ENCODE measurements at regions of chr11 and their contacts with region 1.

Region 1: DNA sequence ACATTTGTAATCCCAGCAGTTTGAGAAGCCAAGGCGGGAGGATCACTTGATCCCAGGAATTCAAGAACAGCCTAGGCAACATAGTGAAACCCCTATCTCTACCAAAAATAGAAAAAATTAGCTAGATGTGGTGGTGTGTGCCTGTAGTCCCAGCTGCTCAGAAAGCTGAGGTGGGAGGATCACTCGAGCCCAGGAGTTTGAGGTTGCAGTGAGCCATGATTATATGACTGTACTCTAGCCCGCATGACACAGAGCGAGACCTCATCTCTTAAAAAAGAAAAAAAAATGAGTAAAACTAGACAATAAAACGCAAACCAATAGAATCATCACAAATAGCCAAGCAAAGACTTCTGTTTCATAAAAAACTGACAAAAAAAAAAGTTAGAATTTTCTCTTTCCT is 21.8 kb downstream of the NUCB2 start:
- DNase-seq: peak; percentile 84
- H3K4me3 Mint-ChIP-seq: no peak overlapping the region
- H3K27ac Mint-ChIP-seq: no peak overlapping the region
- H3K4me1 Mint-ChIP-seq: peaks cover 36% of the 10 kb centered on the region
- H3K27me3 Mint-ChIP-seq: no peaks in the 10 kb centered on the region

Region 2: GRCh38 chr11:17207317-17208258 is 90.7 kb before region 1 on chr11 and contains the start of gene PIK3C2A:
- CTCF ChIA-PET with region 1: no interaction called
- POLR2A ChIA-PET with region 1: no interaction called
- intact Hi-C with region 1: loop called (anchors 1 kb)
- DNase-seq: peak; percentile 96
- H3K4me3 Mint-ChIP-seq: peak within 1 kb of the TSS; percentile 99
- H3K27ac Mint-ChIP-seq: peak within 1 kb of the TSS; percentile 90
- H3K4me1 Mint-ChIP-seq: peaks cover 35% of the 10 kb centered on the region
- H3K27me3 Mint-ChIP-seq: no peaks in the 10 kb centered on the region
- total RNA-seq, gene PIK3C2A: 21.2 to 21.7 TPM

Region 3: DNA sequence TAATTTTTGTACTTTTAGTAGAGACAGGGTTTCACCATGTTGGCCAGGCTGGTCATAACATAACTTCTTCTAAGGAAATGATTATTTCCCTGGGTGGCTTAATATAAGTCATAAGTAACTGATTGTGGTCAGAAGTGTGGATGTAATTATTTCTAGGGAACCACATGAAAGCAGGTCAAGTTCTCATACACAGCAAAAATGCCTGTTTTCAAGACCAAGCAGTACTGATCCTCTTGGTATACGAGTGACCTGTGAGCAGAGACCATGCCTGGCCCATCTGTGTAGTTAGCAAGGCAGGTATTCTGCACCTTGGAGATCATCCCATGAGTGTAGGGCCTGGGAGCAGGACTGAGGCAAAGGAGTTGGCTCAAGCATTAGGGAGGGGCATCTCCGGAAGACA is 54.3 kb before region 1 on chr11:
- CTCF ChIA-PET with region 1: no interaction called
- POLR2A ChIA-PET with region 1: no interaction called
- intact Hi-C with region 1: loop called (anchors 1 kb)
- DNase-seq: no peak
- H3K4me3 Mint-ChIP-seq: no peak overlapping the region
- H3K27ac Mint-ChIP-seq: no peak overlapping the region
- H3K4me1 Mint-ChIP-seq: peaks cover 3% of the 10 kb centered on the region
- H3K27me3 Mint-ChIP-seq: peaks cover 18% of the 10 kb centered on the region

Region 4: DNA sequence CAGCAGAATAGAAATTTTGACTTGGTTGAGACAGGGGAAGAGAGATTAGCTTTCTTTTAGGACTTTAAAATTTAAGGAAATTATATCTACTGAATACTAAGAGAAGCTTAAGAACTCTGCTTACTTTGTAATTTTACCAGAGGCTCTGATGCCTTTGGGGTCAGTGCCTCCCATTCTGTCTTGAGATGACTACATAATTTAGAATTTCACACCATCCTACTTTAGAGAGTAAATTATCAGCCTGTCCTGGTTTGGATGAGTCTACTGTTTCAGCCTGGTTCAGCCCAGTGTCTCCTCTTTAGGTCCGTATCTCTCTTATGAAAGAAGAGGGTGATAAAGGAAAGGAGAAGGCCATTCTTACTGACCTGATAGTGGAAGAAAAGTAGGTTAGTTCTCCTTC is 12.0 kb before region 1 on chr11:
- CTCF ChIA-PET with region 1: interaction called, 3 read pairs
- POLR2A ChIA-PET with region 1: interaction called, 5 read pairs
- intact Hi-C with region 1: loop called (anchors 1 kb)
- DNase-seq: no peak
- H3K4me3 Mint-ChIP-seq: no peak overlapping the region
- H3K27ac Mint-ChIP-seq: no peak overlapping the region
- H3K4me1 Mint-ChIP-seq: peaks cover 32% of the 10 kb centered on the region
- H3K27me3 Mint-ChIP-seq: no peaks in the 10 kb centered on the region

Region 5: GRCh38 chr11:17343907-17344306 is 45.6 kb after region 1 on chr11:
- CTCF ChIA-PET with region 1: no interaction called
- POLR2A ChIA-PET with region 1: no interaction called
- intact Hi-C with region 1: loop called (anchors 1 kb)
- DNase-seq: peak; percentile 59
- H3K4me3 Mint-ChIP-seq: no peak overlapping the region
- H3K27ac Mint-ChIP-seq: no peak overlapping the region
- H3K4me1 Mint-ChIP-seq: peaks cover 8% of the 10 kb centered on the region
- H3K27me3 Mint-ChIP-seq: no peaks in the 10 kb centered on the region

Region 6: DNA sequence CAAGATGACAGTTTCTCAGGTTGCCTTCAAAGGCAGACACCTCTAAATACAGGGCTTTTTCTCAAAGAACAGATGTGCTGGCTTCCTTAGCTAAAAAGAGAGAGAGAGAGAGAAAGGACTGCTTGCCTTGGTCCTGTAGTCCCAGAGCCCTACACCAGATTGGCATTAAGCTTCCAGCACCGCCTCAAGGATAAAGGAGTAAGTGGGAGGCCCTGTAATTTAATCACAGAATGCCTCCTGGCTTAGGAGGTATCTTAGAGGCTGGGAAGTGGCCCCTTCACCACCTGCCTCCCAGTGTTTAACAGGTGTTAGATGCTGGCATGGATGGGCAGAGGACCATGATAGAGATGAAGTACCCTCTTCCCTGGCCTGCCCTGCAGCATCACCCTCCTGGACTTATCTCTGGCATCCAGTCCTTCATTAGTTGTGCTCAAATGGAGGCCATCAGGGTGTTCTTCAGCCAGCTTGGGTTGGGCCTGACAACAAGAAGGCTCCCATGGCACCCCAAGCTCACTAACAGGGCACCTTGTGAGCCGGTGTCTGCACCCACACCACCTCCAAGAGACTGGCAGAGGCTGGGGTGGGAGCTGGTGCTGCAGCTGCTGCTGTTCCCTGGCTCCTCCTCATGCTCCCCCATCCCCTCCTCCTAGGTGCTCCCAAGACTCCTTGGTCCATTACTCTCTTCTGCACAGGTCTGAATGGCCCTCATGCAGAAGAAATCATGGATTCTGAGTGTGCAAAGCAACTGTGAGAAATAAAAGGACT is 145.8 kb after region 1 on chr11:
- CTCF ChIA-PET with region 1: no interaction called
- POLR2A ChIA-PET with region 1: no interaction called
- intact Hi-C with region 1: no loop called
- DNase-seq: no peak
- H3K4me3 Mint-ChIP-seq: no peak overlapping the region
- H3K27ac Mint-ChIP-seq: no peak overlapping the region
- H3K4me1 Mint-ChIP-seq: peaks cover 6% of the 10 kb centered on the region
- H3K27me3 Mint-ChIP-seq: peaks cover 3% of the 10 kb centered on the region